Activated CD4-positive, alpha-beta memory T cell treated with anti-CD3 and anti-CD28 coated beads, Interleukin-2, amount 10 ng/mL, durations not matched to agents 7 days and 5 days (primary cell): ENCODE measurements at regions of chr7 and their contacts with region 1.

Region 1: DNA sequence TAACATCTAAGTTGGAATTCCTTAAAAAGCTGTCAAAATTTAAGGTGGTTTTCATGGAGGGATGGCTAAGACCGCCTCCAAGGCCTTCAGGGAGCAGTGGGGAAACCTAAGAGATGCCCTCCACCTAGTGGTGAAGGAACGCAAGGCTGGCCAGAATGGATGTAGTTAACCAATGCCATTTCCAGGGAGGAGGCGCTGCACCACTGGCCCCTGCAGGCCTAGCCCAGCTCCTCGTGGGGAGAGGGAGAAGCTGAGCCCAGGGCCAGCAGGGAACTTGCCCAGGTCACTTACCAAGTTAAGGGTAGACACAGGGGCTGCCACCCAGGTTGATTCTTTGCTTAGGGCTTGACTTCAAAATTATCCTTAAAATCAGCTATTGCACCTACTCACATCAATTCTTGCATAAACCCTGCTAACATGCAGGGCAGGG is 32.0 kb downstream of the FIGNL1 start:
- DNase-seq: peak; percentile 81
- H3K4me3 Mint-ChIP-seq: no peak overlapping the region
- H3K27ac Mint-ChIP-seq: no peak overlapping the region
- H3K4me1 Mint-ChIP-seq: peaks cover 23% of the 10 kb centered on the region
- H3K27me3 Mint-ChIP-seq: no peaks in the 10 kb centered on the region

Region 2: DNA sequence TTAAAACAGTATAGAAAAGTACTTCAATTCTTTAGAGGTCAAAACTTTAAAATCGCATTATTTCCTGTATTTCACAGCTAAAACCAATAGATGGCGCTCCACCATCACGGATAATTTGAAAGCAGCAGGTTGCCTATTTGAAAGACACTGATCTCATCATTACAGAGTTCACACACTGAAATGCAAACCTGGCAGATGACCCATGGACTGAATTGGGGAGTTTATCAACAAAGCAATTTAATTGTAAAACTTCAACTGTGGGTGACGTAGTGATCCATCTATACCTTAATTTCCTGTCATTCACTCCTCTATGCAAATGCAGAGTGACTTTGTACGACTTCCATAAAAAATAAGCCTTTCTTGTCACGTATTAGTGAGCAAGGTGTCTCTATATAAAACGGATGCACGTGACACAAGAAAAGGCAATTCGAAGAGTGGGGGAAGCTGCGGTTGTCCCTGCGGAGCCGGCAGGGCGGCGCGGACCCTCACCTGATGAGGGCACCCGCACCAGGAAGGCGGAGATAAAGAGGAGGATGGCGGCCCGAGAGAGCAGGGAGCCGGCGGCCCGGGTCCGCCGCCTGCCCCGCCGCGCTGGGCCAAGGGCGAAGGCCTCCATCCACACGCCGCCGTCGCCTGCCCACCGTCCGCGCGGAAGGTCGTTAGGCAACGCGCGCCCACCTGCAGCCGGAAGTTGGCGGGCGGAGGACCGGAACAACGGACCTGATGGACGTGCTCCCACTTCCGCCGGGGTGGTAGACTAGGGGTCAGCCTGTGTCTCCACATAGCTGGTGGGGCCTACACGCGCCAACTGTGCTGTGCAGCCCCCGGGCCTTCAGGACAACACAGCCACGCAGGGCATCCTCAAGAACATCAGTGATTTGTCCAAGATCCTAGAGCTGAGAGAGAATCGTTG is 325.3 kb before region 1 on chr7 and contains the start of gene ZPBP:
- CTCF ChIA-PET with region 1: interaction called, 35 read pairs
- POLR2A ChIA-PET with region 1: interaction called, 5 read pairs
- DNase-seq: peak; percentile 43
- H3K4me3 Mint-ChIP-seq: peak within 1 kb of the TSS; percentile 73
- H3K27ac Mint-ChIP-seq: peak within 1 kb of the TSS; percentile 47
- H3K4me1 Mint-ChIP-seq: peaks cover 4% of the 10 kb centered on the region
- H3K27me3 Mint-ChIP-seq: peaks cover 19% of the 10 kb centered on the region
- total RNA-seq, gene ZPBP: not detected

Region 3: GRCh38 chr7:50119815-50120637 is 298.1 kb before region 1 on chr7:
- CTCF ChIA-PET with region 1: interaction called, 45 read pairs
- POLR2A ChIA-PET with region 1: no interaction called
- DNase-seq: peak; percentile 47
- H3K4me3 Mint-ChIP-seq: no peak overlapping the region
- H3K27ac Mint-ChIP-seq: no peak overlapping the region
- H3K4me1 Mint-ChIP-seq: no peaks in the 10 kb centered on the region
- H3K27me3 Mint-ChIP-seq: peaks cover 34% of the 10 kb centered on the region

Region 4: GRCh38 chr7:50142425-50143017 is 275.6 kb before region 1 on chr7:
- CTCF ChIA-PET with region 1: interaction called, 65 read pairs
- POLR2A ChIA-PET with region 1: no interaction called
- DNase-seq: no peak
- H3K4me3 Mint-ChIP-seq: peak overlapping the region; percentile 29
- H3K27ac Mint-ChIP-seq: peak overlapping the region; percentile 42
- H3K4me1 Mint-ChIP-seq: peaks cover 42% of the 10 kb centered on the region
- H3K27me3 Mint-ChIP-seq: peaks cover 12% of the 10 kb centered on the region

Region 5: GRCh38 chr7:50147951-50148808 is 269.9 kb before region 1 on chr7:
- CTCF ChIA-PET with region 1: interaction called, 65 read pairs
- POLR2A ChIA-PET with region 1: no interaction called
- DNase-seq: no peak
- H3K4me3 Mint-ChIP-seq: no peak overlapping the region
- H3K27ac Mint-ChIP-seq: peak overlapping the region; percentile 29
- H3K4me1 Mint-ChIP-seq: peaks cover 48% of the 10 kb centered on the region
- H3K27me3 Mint-ChIP-seq: no peaks in the 10 kb centered on the region

Region 6: GRCh38 chr7:50397320-50397970 is 20.7 kb before region 1 on chr7:
- CTCF ChIA-PET with region 1: interaction called, 13 read pairs
- POLR2A ChIA-PET with region 1: no interaction called
- DNase-seq: peak; percentile 47
- H3K4me3 Mint-ChIP-seq: peak overlapping the region; percentile 10
- H3K27ac Mint-ChIP-seq: peak overlapping the region; percentile 90
- H3K4me1 Mint-ChIP-seq: peaks cover 78% of the 10 kb centered on the region
- H3K27me3 Mint-ChIP-seq: no peaks in the 10 kb centered on the region